Heart left ventricle (tissue), 16 donors: ENCODE measurements at regions of chr15 and their contacts with region 1.

Region 1: DNA sequence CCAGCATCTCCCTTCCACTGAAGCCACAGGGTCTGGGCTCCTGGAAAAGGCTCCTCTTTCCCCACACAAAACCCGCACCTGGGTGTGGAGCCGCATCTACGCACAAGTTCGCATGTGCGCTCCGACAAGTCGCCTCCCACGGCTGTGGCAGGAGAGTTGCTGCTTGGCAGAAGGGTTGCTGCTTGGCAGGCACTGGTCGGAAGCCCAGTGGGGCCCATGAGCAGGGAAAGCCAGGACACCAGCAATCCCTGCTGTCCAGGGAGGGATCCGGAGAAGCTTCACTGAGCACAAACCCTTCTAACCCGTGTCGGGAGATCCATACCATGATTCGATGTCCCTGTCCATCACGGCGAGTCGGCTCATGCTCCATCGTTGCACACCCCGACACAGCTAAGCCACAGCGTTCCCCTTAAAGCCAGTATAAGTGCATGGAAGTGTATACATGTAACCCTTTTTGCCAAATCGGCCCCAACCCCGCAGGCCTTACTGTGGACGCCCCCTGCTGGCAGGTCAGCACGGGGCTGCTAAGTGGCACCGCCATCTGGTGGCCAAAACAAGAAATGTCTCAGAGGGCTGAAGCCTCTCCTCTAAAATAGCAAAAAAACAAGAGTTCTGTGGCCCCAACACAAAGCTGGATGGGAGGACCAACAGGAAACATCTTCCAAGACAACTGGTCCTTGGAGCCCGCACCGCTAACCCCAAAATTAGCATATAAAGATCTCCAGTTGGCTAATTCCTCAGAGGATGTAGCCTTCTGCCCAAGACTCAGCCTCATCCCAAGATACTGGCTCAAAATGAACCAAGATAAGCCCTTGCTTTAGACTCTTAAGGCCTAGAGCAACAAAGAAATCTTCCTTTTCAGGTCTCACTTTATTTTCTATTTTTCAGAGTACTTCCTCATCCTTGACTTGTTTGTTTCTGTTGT is 8.3 kb downstream of the ANKRD63 start:
- DNase-seq: peak; percentile 79 to 90 (median 82)
- ATAC-seq: peak; percentile 43 to 69 (median 55)
- H3K4me3 ChIP-seq: no peak overlapping the region
- H3K27ac ChIP-seq: no peak overlapping the region
- H3K4me1 ChIP-seq: peaks cover 0 to 31% (median 2%) of the 10 kb centered on the region in 12 donors
- H3K27me3 ChIP-seq: peaks cover 2 to 20% (median 8%) of the 10 kb centered on the region in 9 donors
- CTCF ChIP-seq: peak; percentile 99 to 100 (median 100)
- POLR2A ChIP-seq: no peak

Region 2: GRCh38 chr15:40115670-40116093 is 158.9 kb before region 1 on chr15:
- intact Hi-C with region 1: loop called in 1 of 10 experiments (anchors 10 kb)
- DNase-seq: peak in 3 of 5 donors; percentile 42 to 71 (median 45)
- ATAC-seq: peak; percentile 25 to 68 (median 44)
- H3K4me3 ChIP-seq: no peak overlapping the region
- H3K27ac ChIP-seq: no peak overlapping the region
- H3K4me1 ChIP-seq: peaks cover 0 to 9% (median 0%) of the 10 kb centered on the region in 12 donors
- H3K27me3 ChIP-seq: peaks cover 0 to 4% (median 0%) of the 10 kb centered on the region in 9 donors
- CTCF ChIP-seq: no peak
- POLR2A ChIP-seq: no peak

Region 3: DNA sequence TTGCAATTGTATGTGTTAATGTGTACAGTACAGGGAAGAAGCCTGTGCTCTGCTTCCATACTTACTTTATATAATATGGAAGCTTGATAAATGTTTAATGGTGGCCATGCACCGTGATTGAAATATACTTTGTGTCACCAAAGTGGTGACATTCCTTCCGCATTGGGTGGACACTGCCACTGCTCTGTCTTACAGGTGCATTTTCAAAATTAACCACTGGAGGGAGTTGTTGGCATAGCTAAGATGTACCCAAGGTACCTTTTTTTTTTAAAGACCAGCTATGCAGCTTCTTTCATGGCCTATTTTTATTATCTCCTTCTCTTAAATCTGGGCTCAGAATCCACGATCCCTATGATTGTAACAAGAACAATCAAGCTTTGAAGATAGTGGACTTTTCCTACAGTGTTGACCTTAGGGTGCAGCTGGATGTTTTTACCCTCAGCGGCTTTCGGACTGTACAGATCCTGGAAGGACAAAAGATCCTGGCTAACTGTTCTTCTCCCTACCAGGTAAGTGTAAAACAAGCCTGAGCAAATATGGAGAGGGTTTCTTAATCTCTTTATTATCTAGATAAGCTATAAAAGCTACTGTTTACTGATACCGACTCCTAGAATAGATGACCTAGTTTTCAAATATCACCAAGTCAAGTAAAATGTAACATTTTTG is 57.3 kb before region 1 on chr15:
- intact Hi-C with region 1: loop called (anchors 1 to 2 kb)
- DNase-seq: peak in 2 of 5 donors; percentile 39 to 52
- ATAC-seq: peak; percentile 78 to 87 (median 84)
- H3K4me3 ChIP-seq: no peak overlapping the region
- H3K27ac ChIP-seq: no peak overlapping the region
- H3K4me1 ChIP-seq: no peaks in the 10 kb centered on the region
- H3K27me3 ChIP-seq: no peaks in the 10 kb centered on the region
- CTCF ChIP-seq: peak; percentile 73 to 91 (median 87)
- POLR2A ChIP-seq: no peak

Region 4: GRCh38 chr15:40307421-40308211 is 33.0 kb after region 1 on chr15 and contains the start of gene PLCB2:
- intact Hi-C with region 1: loop called in 9 of 10 experiments (anchors 1 to 5 kb)
- DNase-seq: peak; percentile 43 to 81 (median 52)
- ATAC-seq: peak; percentile 39 to 63 (median 57)
- H3K4me3 ChIP-seq: peak within 1 kb of the TSS in 10 of 12 donors; percentile 9 to 65 (median 33)
- H3K27ac ChIP-seq: peak within 1 kb of the TSS in 5 of 12 donors; percentile 54 to 95 (median 63)
- H3K4me1 ChIP-seq: peaks cover 0 to 25% (median 0%) of the 10 kb centered on the region in 12 donors
- H3K27me3 ChIP-seq: peaks cover 0 to 6% (median 0%) of the 10 kb centered on the region in 9 donors
- CTCF ChIP-seq: peak in 7 of 12 donors; percentile 4 to 38 (median 24)
- POLR2A ChIP-seq: no peak
- total RNA-seq, gene PLCB2: 1.6 to 46.2 (median 4.8) TPM

Region 5: GRCh38 chr15:40344631-40345120 is 70.1 kb after region 1 on chr15:
- intact Hi-C with region 1: no loop called
- DNase-seq: peak in 3 of 5 donors; percentile 61 to 84 (median 66)
- ATAC-seq: no peak
- H3K4me3 ChIP-seq: no peak overlapping the region
- H3K27ac ChIP-seq: peak overlapping the region in 2 of 12 donors; percentile 80 to 96
- H3K4me1 ChIP-seq: peaks cover 14 to 58% (median 41%) of the 10 kb centered on the region in 12 donors
- H3K27me3 ChIP-seq: no peaks in the 10 kb centered on the region
- CTCF ChIP-seq: peak; percentile 58 to 85 (median 77)
- POLR2A ChIP-seq: no peak